ENCODE measurements at regions of chrX and their contacts with region 1.

Region 1: GRCh38 chrX:132488819-132489577 is at the start of gene MBNL3:
- DNase-seq: peak; percentile 43 to 83
- ATAC-seq: peak; percentile 62 to 82 (median 68)
- H3K4me3 ChIP-seq: peak within 1 kb of the TSS; percentile 68
- H3K4me3 Mint-ChIP-seq: peak within 1 kb of the TSS; percentile 97
- H3K27ac ChIP-seq: peak within 1 kb of the TSS; percentile 90
- H3K27ac Mint-ChIP-seq: peak within 1 kb of the TSS; percentile 84 to 89
- H3K4me1 ChIP-seq: peaks cover 6% of the 10 kb centered on the region
- H3K4me1 Mint-ChIP-seq: peaks cover 19 to 44% of the 10 kb centered on the region in 2 donors
- H3K27me3 ChIP-seq: no peaks in the 10 kb centered on the region
- H3K27me3 Mint-ChIP-seq: peaks cover 0 to 22% of the 10 kb centered on the region in 2 donors
- CTCF ChIP-seq: no peak
- total RNA-seq, gene MBNL3: 55.3 to 64.3 (median 59.3) TPM

Region 2: GRCh38 chrX:132474522-132474921 is 14.5 kb before region 1 on chrX:
- intact Hi-C with region 1: loop called (anchors 2 kb)
- DNase-seq: no peak
- ATAC-seq: no peak
- H3K4me3 ChIP-seq: no peak overlapping the region
- H3K4me3 Mint-ChIP-seq: no peak overlapping the region
- H3K27ac ChIP-seq: no peak overlapping the region
- H3K27ac Mint-ChIP-seq: peak overlapping the region; percentile 7 to 66
- H3K4me1 ChIP-seq: peaks cover 4% of the 10 kb centered on the region
- H3K4me1 Mint-ChIP-seq: peaks cover 15 to 17% of the 10 kb centered on the region in 2 donors
- H3K27me3 ChIP-seq: no peaks in the 10 kb centered on the region
- H3K27me3 Mint-ChIP-seq: peaks cover 0 to 9% of the 10 kb centered on the region in 2 donors
- CTCF ChIP-seq: no peak

Region 3: DNA sequence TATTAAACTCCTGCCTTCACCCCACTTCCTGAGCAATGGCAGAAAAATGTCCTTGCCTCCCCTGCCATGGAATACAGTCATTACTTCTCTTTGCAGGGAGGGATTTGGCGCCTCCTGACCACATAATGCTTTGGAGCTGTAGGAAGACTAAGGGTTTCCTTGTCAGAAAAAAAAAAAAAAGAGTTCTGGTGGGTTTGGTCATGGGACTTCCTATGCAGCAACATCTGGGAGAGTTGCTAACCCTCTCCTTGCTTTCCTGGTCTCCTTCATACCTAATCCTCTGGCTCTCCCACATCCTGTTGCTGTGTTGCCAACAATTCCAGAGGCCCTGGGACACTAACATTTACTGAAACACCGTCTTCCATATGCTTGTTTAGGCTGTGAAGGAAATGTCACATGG is 75.0 kb after region 1 on chrX:
- intact Hi-C with region 1: no loop called
- DNase-seq: no peak
- ATAC-seq: no peak
- H3K4me3 ChIP-seq: no peak overlapping the region
- H3K4me3 Mint-ChIP-seq: no peak overlapping the region
- H3K27ac ChIP-seq: no peak overlapping the region
- H3K27ac Mint-ChIP-seq: no peak overlapping the region
- H3K4me1 ChIP-seq: no peaks in the 10 kb centered on the region
- H3K4me1 Mint-ChIP-seq: no peaks in the 10 kb centered on the region
- H3K27me3 ChIP-seq: no peaks in the 10 kb centered on the region
- H3K27me3 Mint-ChIP-seq: peaks cover 4 to 48% of the 10 kb centered on the region in 2 donors
- CTCF ChIP-seq: no peak

Region 4: DNA sequence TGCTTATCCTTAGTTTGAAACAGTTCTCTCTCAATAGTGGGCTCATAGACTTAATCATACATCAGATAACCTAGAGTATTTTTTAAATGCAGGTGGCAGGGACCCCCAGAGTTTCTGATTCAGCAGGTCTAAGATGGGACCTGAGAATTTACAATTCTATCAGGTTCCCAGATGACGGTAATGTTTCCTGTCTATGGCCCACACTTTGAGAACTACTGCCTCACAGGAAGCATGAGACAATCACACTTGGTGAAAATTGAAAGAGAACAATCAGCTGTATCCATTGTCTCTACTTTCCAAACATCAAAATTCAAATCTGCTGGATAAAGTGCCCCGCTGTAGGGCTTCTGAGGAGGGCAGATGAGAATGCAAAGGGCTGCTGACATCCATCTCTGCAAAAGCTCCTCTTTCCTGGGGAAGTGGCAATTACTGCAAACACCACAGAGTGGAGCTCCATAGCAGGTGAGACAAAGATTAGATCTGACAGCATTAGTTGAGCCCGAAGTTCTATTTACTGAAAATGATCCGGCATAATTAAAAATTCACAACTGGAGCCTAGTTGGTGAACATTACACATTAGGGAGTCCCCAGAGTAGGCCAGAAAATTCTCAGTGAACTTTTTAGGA is 187.7 kb after region 1 on chrX:
- intact Hi-C with region 1: loop called (anchors 10 kb)
- DNase-seq: peak in 1 of 2 donors; percentile 19
- ATAC-seq: peak; percentile 46 to 62 (median 51)
- H3K4me3 ChIP-seq: no peak overlapping the region
- H3K4me3 Mint-ChIP-seq: peak overlapping the region; percentile 74
- H3K27ac ChIP-seq: peak overlapping the region; percentile 69
- H3K27ac Mint-ChIP-seq: peak overlapping the region; percentile 82 to 90
- H3K4me1 ChIP-seq: peaks cover 18% of the 10 kb centered on the region
- H3K4me1 Mint-ChIP-seq: peaks cover 18 to 24% of the 10 kb centered on the region in 2 donors
- H3K27me3 ChIP-seq: no peaks in the 10 kb centered on the region
- H3K27me3 Mint-ChIP-seq: peaks cover 0 to 34% of the 10 kb centered on the region in 2 donors
- CTCF ChIP-seq: no peak

Measured in natural killer cell (primary cell).